ENCODE measurements at regions of chr3 and their contacts with region 1.

Region 1: GRCh38 chr3:76527773-76528172 is 512.1 kb upstream of the ROBO2 start:
- DNase-seq: no peak
- H3K4me3 ChIP-seq: no peak overlapping the region
- H3K27ac ChIP-seq: no peak overlapping the region
- H3K4me1 ChIP-seq: no peaks in the 10 kb centered on the region
- H3K27me3 ChIP-seq: no peaks in the 10 kb centered on the region
- CTCF ChIP-seq: no peak

Region 2: DNA sequence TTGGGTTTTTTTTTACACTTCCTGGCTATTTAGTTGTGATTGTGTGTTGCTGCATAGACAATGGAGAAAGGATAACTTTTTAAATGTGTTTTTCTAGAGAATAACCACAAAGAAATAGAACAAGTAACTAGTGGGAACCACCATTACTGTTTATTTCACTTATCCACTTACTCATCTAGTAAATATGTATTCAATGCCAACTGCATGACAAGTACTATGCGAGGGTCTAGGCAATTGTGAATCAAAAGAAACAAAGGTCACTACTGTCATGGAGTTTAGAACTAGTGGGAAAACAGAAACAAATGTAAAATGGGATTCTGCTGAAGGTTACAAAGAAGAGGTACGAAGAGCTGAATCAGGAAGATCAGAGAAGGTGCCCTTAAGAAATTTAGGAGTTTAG is 88.8 kb before region 1 on chr3:
- CTCF ChIA-PET with region 1: no interaction called
- dilution Hi-C with region 1: loop called (anchors 25 kb)
- in situ Hi-C with region 1: no loop called
- intact Hi-C with region 1: no loop called
- DNase-seq: no peak
- H3K4me3 ChIP-seq: no peak overlapping the region
- H3K27ac ChIP-seq: no peak overlapping the region
- H3K4me1 ChIP-seq: no peaks in the 10 kb centered on the region
- H3K27me3 ChIP-seq: no peaks in the 10 kb centered on the region
- CTCF ChIP-seq: no peak